PC-9 (cell line): ENCODE measurements at regions of chrX and their contacts with region 1.

Region 1: DNA sequence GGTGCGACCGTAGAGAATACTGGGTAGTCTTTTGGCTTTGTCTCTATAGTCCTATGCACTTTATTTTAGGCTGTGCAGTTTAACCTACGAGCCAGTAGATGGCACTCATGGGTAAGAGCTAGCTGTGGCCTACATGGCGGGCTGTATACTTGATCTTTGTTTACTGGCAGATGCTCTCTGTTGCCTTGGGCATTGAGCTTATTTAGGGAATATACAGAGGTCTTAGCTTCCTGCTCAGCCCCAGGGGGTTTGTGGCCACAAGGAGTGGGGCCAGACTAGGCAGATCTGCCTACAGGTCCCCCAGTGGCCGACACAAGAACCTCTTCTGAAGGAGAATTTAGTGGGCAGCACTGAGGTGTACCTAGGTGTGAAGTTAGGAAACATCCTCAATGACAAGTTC is 227.6 kb upstream of the HDX start:
- DNase-seq: peak in 1 of 2 experiments; percentile 1
- H3K4me3 ChIP-seq: no peak overlapping the region
- H3K27ac ChIP-seq: no peak overlapping the region
- H3K4me1 ChIP-seq: no peaks in the 10 kb centered on the region
- H3K27me3 ChIP-seq: no peaks in the 10 kb centered on the region
- CTCF ChIP-seq: peak; percentile 77

Region 2: GRCh38 chrX:84710611-84711010 is 19.2 kb before region 1 on chrX:
- CTCF ChIA-PET with region 1: no interaction called
- POLR2A ChIA-PET with region 1: no interaction called
- intact Hi-C with region 1: no loop called
- DNase-seq: no peak
- H3K4me3 ChIP-seq: no peak overlapping the region
- H3K27ac ChIP-seq: no peak overlapping the region
- H3K4me1 ChIP-seq: no peaks in the 10 kb centered on the region
- H3K27me3 ChIP-seq: no peaks in the 10 kb centered on the region
- CTCF ChIP-seq: no peak

Region 3: DNA sequence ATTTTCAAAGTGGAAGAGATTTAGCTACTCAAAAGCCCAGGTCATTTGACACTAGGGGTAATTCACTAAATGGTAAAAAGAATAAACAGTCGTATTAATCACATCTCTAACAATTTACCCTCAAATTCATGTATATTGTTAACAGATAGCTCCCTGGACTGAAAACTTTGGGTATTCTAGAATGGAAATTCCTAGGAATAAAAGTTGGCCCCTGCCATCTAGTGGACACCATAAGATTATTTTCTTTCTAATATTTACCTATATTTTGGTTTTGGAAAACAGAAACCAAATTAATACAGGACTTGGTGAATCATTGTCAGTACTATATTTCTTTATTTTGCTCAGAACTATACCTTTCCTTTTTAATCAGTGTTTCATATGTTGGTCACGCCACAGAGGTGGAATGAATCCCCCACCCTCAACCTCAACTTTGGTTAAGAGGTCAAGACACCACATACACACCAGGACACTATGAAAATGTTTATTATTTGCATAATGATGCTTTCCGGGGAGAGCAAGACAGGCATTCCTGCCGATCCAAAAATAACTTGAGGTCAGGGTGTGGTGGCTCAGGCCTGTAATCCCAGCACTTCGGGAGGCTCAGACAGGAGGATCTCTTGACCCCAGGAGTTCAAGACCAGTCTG is 177.6 kb after region 1 on chrX:
- CTCF ChIA-PET with region 1: no interaction called
- POLR2A ChIA-PET with region 1: no interaction called
- intact Hi-C with region 1: loop called (anchors 10 kb)
- DNase-seq: no peak
- H3K4me3 ChIP-seq: no peak overlapping the region
- H3K27ac ChIP-seq: no peak overlapping the region
- H3K4me1 ChIP-seq: no peaks in the 10 kb centered on the region
- H3K27me3 ChIP-seq: no peaks in the 10 kb centered on the region
- CTCF ChIP-seq: peak; percentile 45

Region 4: GRCh38 chrX:85052636-85053343 is 323.0 kb after region 1 on chrX:
- CTCF ChIA-PET with region 1: no interaction called
- POLR2A ChIA-PET with region 1: no interaction called
- intact Hi-C with region 1: loop called (anchors 5 kb)
- DNase-seq: peak in 1 of 2 experiments; percentile 60
- H3K4me3 ChIP-seq: no peak overlapping the region
- H3K27ac ChIP-seq: peak overlapping the region; percentile 54
- H3K4me1 ChIP-seq: peaks cover 9% of the 10 kb centered on the region
- H3K27me3 ChIP-seq: no peaks in the 10 kb centered on the region
- CTCF ChIP-seq: peak; percentile 49